Astrocyte of the cerebellum (primary cell): ENCODE measurements at regions of chr7 and their contacts with region 1.

Region 1: GRCh38 chr7:116249708-116250553 is 39.6 kb downstream of the TES start:
- DNase-seq: no peak
- H3K4me3 ChIP-seq: no peak overlapping the region
- CTCF ChIP-seq: peak; percentile 68

Region 2: GRCh38 chr7:116165717-116166116 is 84.2 kb before region 1 on chr7:
- in situ Hi-C with region 1: loop called (anchors 5 kb)
- DNase-seq: no peak
- H3K4me3 ChIP-seq: no peak overlapping the region
- CTCF ChIP-seq: no peak

Region 3: DNA sequence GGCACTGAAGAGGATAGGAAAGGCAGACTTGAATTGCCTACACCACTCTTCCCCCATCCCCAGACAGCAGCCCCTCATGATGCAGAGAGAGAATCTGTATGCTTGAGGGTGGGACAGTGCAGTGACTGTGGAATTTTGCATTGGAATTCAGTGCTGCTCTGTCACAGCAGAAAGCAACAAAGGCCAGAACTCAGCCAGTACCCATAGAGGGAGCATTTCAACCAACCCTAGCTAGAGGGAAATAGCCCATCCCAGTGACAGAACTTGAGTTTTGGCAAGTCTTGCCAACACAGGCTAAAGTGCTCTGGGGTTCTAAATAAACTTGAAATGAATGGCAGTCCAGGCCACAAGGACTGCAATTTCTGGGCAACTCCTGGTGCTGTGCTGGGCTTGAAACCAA is 40.8 kb after region 1 on chr7:
- in situ Hi-C with region 1: no loop called
- DNase-seq: no peak
- H3K4me3 ChIP-seq: no peak overlapping the region
- CTCF ChIP-seq: no peak

Region 4: GRCh38 chr7:116524609-116525297 is 274.8 kb after region 1 on chr7 and contains the start of gene CAV1:
- in situ Hi-C with region 1: loop called (anchors 5 kb)
- DNase-seq: peak; percentile 76
- H3K4me3 ChIP-seq: peak within 1 kb of the TSS; percentile 79
- CTCF ChIP-seq: no peak